CD4-positive, alpha-beta T cell (primary cell): ENCODE measurements at regions of chr9 and their contacts with region 1.

Region 1: DNA sequence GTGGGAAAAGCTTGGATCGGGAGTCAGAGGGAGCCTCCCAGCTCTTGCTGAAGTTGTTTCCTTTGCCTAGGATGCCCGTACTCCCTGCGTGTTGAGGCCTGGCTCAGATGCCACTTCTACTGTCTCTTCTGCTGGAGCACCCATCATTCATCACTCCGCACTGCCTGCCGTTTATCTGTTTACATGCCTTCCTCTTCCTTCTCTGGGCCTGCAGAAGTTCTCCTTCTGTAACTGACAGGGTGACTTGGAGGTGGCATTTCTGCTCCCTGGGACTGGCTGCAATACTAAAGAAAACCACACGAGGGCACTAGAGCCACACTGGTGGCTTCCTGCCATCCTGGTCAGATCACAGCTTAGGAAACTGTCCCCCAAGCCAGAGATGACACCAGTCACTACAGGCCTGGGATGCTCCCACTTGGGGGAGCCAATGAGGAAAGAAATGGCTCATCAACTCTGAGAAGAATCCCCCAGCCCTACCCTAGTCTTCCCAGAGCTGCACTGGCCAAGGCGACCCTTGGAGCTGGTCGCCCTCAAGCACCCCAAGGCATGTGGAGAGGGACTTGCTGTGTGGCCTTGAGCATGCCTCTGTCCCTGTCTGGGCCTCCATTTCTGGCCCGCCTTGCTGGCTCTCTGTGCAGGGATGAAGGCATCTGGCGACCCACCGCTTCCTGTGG is 9.7 kb upstream of the SLC25A51 start:
- DNase-seq: peak; percentile 58 to 85 (median 76)
- ATAC-seq: peak; percentile 90
- H3K4me3 ChIP-seq: no peak overlapping the region
- H3K4me3 Mint-ChIP-seq: no peak overlapping the region
- H3K27ac ChIP-seq: no peak overlapping the region
- H3K27ac Mint-ChIP-seq: no peak overlapping the region
- H3K4me1 ChIP-seq: no peaks in the 10 kb centered on the region
- H3K4me1 Mint-ChIP-seq: no peaks in the 10 kb centered on the region
- H3K27me3 ChIP-seq: no peaks in the 10 kb centered on the region
- H3K27me3 Mint-ChIP-seq: peaks cover 5% of the 10 kb centered on the region
- CTCF ChIP-seq: peak; percentile 95

Region 2: GRCh38 chr9:37953775-37954437 is 40.3 kb after region 1 on chr9:
- CTCF ChIA-PET with region 1: no interaction called
- POLR2A ChIA-PET with region 1: no interaction called
- intact Hi-C with region 1: no loop called
- DNase-seq: peak in 4 of 14 experiments; percentile 15 to 40 (median 19)
- ATAC-seq: no peak
- H3K4me3 ChIP-seq: no peak overlapping the region
- H3K4me3 Mint-ChIP-seq: no peak overlapping the region
- H3K27ac ChIP-seq: no peak overlapping the region
- H3K27ac Mint-ChIP-seq: no peak overlapping the region
- H3K4me1 ChIP-seq: no peaks in the 10 kb centered on the region
- H3K4me1 Mint-ChIP-seq: no peaks in the 10 kb centered on the region
- H3K27me3 ChIP-seq: no peaks in the 10 kb centered on the region
- H3K27me3 Mint-ChIP-seq: no peaks in the 10 kb centered on the region
- CTCF ChIP-seq: no peak

Region 3: GRCh38 chr9:38088006-38088925 is 174.6 kb after region 1 on chr9:
- CTCF ChIA-PET with region 1: interaction called, 9 read pairs
- POLR2A ChIA-PET with region 1: no interaction called
- intact Hi-C with region 1: loop called (anchors 1 to 5 kb)
- DNase-seq: peak; percentile 36 to 80 (median 66)
- ATAC-seq: peak; percentile 59
- H3K4me3 ChIP-seq: no peak overlapping the region
- H3K4me3 Mint-ChIP-seq: no peak overlapping the region
- H3K27ac ChIP-seq: no peak overlapping the region
- H3K27ac Mint-ChIP-seq: no peak overlapping the region
- H3K4me1 ChIP-seq: no peaks in the 10 kb centered on the region
- H3K4me1 Mint-ChIP-seq: no peaks in the 10 kb centered on the region
- H3K27me3 ChIP-seq: no peaks in the 10 kb centered on the region
- H3K27me3 Mint-ChIP-seq: peaks cover 4% of the 10 kb centered on the region
- CTCF ChIP-seq: peak; percentile 99

Region 4: DNA sequence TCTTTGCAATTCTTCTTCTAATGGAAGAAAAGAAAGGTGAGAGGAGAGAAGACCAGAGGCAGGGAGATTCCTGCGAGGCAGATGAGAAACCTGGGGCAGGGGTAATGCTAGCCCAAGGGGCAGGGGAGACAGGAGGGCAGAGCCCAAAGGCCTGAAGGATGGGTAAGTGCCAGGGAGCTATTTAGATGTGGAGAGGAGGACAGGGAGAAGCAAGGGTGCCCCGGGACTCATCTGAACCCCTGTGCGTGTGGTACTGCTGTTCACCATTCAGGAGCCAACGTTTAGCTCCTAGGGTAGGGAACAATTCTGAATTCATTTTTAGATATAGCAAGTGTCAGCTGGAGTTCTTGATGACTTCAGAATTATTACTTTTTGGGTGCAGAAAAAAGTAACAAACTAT is 356.2 kb after region 1 on chr9:
- CTCF ChIA-PET with region 1: no interaction called
- POLR2A ChIA-PET with region 1: no interaction called
- intact Hi-C with region 1: loop called in 1 of 2 experiments (anchors 5 kb)
- DNase-seq: no peak
- ATAC-seq: no peak
- H3K4me3 ChIP-seq: no peak overlapping the region
- H3K4me3 Mint-ChIP-seq: no peak overlapping the region
- H3K27ac ChIP-seq: no peak overlapping the region
- H3K27ac Mint-ChIP-seq: no peak overlapping the region
- H3K4me1 ChIP-seq: no peaks in the 10 kb centered on the region
- H3K4me1 Mint-ChIP-seq: no peaks in the 10 kb centered on the region
- H3K27me3 ChIP-seq: peaks cover 0 to 5% of the 10 kb centered on the region in 2 experiments
- H3K27me3 Mint-ChIP-seq: no peaks in the 10 kb centered on the region
- CTCF ChIP-seq: no peak

Region 5: GRCh38 chr9:38401994-38402393 is 488.4 kb after region 1 on chr9:
- CTCF ChIA-PET with region 1: no interaction called
- POLR2A ChIA-PET with region 1: no interaction called
- intact Hi-C with region 1: loop called in 1 of 2 experiments (anchors 2 kb)
- DNase-seq: no peak
- ATAC-seq: no peak
- H3K4me3 ChIP-seq: no peak overlapping the region
- H3K4me3 Mint-ChIP-seq: no peak overlapping the region
- H3K27ac ChIP-seq: no peak overlapping the region
- H3K27ac Mint-ChIP-seq: no peak overlapping the region
- H3K4me1 ChIP-seq: peaks cover 3% of the 10 kb centered on the region
- H3K4me1 Mint-ChIP-seq: no peaks in the 10 kb centered on the region
- H3K27me3 ChIP-seq: peaks cover 0 to 2% of the 10 kb centered on the region in 2 experiments
- H3K27me3 Mint-ChIP-seq: peaks cover 34% of the 10 kb centered on the region
- CTCF ChIP-seq: no peak